ENCODE measurements at regions of chr12 and their contacts with region 1.

Region 1: GRCh38 chr12:113462117-113462774 is 9.4 kb downstream of the LHX5 start:
- DNase-seq: no peak
- H3K4me3 ChIP-seq: peak overlapping the region in 3 of 4 donors; percentile 13 to 55 (median 35)
- H3K27ac ChIP-seq: no peak overlapping the region
- H3K4me1 ChIP-seq: peaks cover 20 to 50% (median 29%) of the 10 kb centered on the region in 3 donors
- H3K27me3 ChIP-seq: peaks cover 30 to 98% (median 41%) of the 10 kb centered on the region in 4 donors
- CTCF ChIP-seq: peak in 5 of 6 experiments; percentile 62 to 83 (median 72)
- POLR2A ChIP-seq: no peak

Region 2: DNA sequence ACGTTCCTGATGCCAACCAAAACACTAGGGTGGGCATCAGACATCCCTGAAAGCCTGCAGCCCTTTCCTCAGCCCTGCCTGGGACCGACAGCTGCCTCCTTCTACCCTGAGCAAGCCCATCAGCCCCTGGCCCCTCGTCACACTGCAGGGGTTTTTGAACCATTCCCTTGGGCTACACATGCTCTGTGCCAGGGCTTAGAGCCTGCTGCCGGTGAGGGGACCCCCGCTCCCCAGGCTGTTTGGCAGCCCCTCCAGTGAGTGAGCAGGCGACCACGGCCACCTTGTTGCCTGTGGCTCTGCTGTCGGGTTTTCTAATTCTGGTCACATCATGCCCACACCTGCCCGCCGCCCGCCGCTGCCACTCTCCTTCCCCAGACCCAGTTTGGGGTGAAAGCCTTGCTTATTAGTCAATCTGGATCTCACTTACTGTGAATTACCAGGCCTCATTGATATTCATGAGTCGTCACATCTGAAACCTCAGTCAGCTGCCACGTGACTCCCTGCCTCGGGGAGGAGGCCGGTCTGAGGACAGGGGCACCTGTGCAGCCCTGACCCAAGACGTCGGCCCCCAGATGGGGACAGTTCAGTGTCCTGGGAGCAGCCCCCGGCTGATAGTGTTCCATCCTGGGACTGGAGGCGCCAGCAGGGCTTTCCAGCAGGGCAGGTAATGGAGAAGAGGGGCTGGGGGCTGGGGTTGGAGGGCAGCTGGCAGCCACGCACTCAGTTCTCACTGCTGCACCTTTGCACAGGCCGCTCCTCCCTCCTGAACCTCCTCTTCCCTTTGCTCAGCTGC is 340.9 kb after region 1 on chr12:
- intact Hi-C with region 1: no loop called
- DNase-seq: no peak
- H3K4me3 ChIP-seq: no peak overlapping the region
- H3K27ac ChIP-seq: no peak overlapping the region
- H3K4me1 ChIP-seq: no peaks in the 10 kb centered on the region
- H3K27me3 ChIP-seq: peaks cover 0 to 17% (median 0%) of the 10 kb centered on the region in 4 donors
- CTCF ChIP-seq: no peak
- POLR2A ChIP-seq: no peak

Region 3: DNA sequence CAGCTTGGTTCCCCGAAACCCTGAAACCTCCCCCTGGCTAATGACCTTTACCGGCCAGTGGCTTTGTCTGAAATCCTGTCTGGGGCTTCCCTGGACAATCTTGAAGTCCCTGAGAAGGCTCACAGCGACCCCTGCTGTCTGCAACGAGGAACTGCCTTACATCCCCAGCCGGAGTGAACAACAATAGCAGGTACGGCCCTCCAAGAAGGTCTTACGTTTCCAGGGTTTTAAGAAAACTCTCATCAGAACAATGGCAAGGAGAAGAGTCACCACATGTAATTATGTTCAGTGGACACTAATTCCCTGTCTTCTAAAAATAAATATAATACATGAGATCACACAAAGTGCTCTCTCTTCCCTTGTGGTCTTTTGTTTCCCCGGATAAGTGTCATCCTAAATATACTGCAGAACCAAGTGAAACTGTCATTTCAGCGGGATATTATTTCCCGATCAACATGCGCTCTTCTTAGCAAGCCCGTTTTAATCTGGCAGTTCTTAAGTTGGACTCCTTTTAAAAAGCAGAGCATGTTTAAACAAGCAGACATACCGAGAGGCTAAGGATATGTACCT is 450.6 kb after region 1 on chr12:
- intact Hi-C with region 1: loop called (anchors 10 kb)
- DNase-seq: no peak
- H3K4me3 ChIP-seq: no peak overlapping the region
- H3K27ac ChIP-seq: no peak overlapping the region
- H3K4me1 ChIP-seq: peaks cover 0 to 15% (median 0%) of the 10 kb centered on the region in 3 donors
- H3K27me3 ChIP-seq: no peaks in the 10 kb centered on the region
- CTCF ChIP-seq: peak; percentile 52 to 90 (median 86)
- POLR2A ChIP-seq: no peak